A673 (cell line): ENCODE measurements at regions of chr3 and their contacts with region 1.

Region 1: GRCh38 chr3:14467814-14468620 is 65.6 kb downstream of the SLC6A6 start:
- DNase-seq: peak; percentile 41
- H3K4me3 ChIP-seq: no peak overlapping the region
- H3K27ac ChIP-seq: no peak overlapping the region
- H3K4me1 ChIP-seq: no peaks in the 10 kb centered on the region
- H3K27me3 ChIP-seq: no peaks in the 10 kb centered on the region
- CTCF ChIP-seq: peak; percentile 84

Region 2: DNA sequence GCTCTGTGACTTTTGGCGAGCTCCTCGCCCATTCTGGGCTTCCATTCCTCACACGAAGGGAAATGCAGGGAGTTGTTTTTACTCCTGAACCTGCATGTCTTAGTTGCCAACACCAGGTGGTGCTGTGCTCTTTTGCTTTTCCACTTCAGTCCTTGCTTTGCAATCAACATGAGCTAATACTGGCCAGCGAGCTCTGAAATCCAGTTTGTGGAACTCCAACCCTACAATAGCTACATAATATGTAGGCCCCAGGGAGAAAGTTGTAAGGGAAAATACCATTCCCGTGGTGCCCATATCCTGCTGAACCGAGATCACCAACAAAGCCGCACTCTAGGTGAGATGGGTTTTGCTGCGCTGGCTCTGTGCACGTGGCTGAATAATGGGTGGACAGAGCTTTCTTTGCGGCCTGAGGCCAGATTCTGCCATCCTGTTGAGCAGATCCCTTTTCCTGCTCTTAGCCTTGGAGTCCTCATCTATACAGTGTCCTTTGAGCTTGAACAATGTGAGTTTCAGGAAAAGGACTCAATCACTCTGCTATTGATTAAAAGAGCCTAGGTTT is 264.4 kb before region 1 on chr3:
- CTCF ChIA-PET with region 1: interaction called, 13 read pairs
- POLR2A ChIA-PET with region 1: no interaction called
- intact Hi-C with region 1: loop called (anchors 1 kb)
- DNase-seq: peak; percentile 76
- H3K4me3 ChIP-seq: no peak overlapping the region
- H3K27ac ChIP-seq: no peak overlapping the region
- H3K4me1 ChIP-seq: no peaks in the 10 kb centered on the region
- H3K27me3 ChIP-seq: no peaks in the 10 kb centered on the region
- CTCF ChIP-seq: peak; percentile 89

Region 3: DNA sequence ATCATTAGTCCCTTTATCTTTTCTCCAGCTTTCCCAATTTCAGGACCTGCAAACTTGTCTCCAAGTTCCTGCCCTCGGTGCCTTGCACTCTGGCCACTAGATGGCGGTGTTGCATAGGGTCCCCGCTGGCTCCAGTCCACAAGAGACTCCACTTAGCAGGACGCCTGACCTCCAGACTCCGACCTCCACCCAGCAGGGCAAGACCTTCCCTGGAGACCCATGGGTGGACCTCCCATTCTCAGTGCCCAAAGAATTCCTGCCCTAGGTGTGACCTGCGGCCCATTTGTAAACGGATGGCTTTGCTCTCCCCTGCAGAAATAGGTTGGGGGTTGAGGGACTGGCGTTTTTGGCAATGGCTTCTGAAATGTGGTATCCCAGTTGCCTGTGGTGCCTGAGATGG is 206.8 kb before region 1 on chr3:
- CTCF ChIA-PET with region 1: interaction called, 6 read pairs
- POLR2A ChIA-PET with region 1: no interaction called
- intact Hi-C with region 1: loop called (anchors 1 kb)
- DNase-seq: peak; percentile 74
- H3K4me3 ChIP-seq: no peak overlapping the region
- H3K27ac ChIP-seq: no peak overlapping the region
- H3K4me1 ChIP-seq: no peaks in the 10 kb centered on the region
- H3K27me3 ChIP-seq: no peaks in the 10 kb centered on the region
- CTCF ChIP-seq: peak; percentile 97

Region 4: GRCh38 chr3:14274999-14275961 is 192.7 kb before region 1 on chr3:
- CTCF ChIA-PET with region 1: no interaction called
- POLR2A ChIA-PET with region 1: no interaction called
- intact Hi-C with region 1: loop called (anchors 5 kb)
- DNase-seq: peak; percentile 30
- H3K4me3 ChIP-seq: no peak overlapping the region
- H3K27ac ChIP-seq: no peak overlapping the region
- H3K4me1 ChIP-seq: peaks cover 7% of the 10 kb centered on the region
- H3K27me3 ChIP-seq: no peaks in the 10 kb centered on the region
- CTCF ChIP-seq: peak; percentile 55

Region 5: DNA sequence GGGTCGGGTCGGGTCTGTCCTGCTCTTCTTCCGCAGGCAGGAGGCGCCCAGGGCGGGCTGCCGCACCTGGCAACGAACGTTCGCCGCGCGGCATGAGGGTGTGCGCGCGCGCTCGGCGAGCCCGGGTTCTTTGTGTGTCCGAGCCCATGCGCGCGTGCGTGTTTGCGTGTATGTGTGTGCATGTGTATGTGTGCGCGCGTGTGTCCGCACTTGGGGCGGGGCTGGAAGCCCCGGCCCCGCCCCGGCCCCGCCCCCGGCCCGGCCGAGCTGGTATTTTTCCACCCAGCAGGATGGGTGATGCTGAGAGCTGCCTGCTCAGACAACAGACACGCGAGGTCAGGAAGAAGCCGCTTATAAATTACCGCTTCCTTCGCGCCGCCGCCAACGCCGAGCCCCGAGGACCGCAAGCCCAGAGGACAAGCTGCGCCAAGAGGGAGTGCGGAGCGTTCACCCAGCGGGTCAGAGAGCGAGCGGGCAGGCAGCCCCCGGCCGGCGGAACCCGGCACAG is 65.7 kb before region 1 on chr3 and contains the start of gene SLC6A6:
- CTCF ChIA-PET with region 1: no interaction called
- POLR2A ChIA-PET with region 1: no interaction called
- intact Hi-C with region 1: loop called (anchors 5 kb)
- DNase-seq: peak; percentile 96
- H3K4me3 ChIP-seq: peak within 1 kb of the TSS; percentile 91
- H3K27ac ChIP-seq: peak within 1 kb of the TSS; percentile 80
- H3K4me1 ChIP-seq: peaks cover 18% of the 10 kb centered on the region
- H3K27me3 ChIP-seq: no peaks in the 10 kb centered on the region
- CTCF ChIP-seq: peak; percentile 45
- total RNA-seq, gene SLC6A6: 48.8 and 55.1 TPM in 2 replicates

Region 6: GRCh38 chr3:14507305-14507741 is 39.3 kb after region 1 on chr3:
- CTCF ChIA-PET with region 1: no interaction called
- POLR2A ChIA-PET with region 1: no interaction called
- intact Hi-C with region 1: no loop called
- DNase-seq: peak; percentile 18
- H3K4me3 ChIP-seq: no peak overlapping the region
- H3K27ac ChIP-seq: no peak overlapping the region
- H3K4me1 ChIP-seq: no peaks in the 10 kb centered on the region
- H3K27me3 ChIP-seq: no peaks in the 10 kb centered on the region
- CTCF ChIP-seq: no peak

Region 7: DNA sequence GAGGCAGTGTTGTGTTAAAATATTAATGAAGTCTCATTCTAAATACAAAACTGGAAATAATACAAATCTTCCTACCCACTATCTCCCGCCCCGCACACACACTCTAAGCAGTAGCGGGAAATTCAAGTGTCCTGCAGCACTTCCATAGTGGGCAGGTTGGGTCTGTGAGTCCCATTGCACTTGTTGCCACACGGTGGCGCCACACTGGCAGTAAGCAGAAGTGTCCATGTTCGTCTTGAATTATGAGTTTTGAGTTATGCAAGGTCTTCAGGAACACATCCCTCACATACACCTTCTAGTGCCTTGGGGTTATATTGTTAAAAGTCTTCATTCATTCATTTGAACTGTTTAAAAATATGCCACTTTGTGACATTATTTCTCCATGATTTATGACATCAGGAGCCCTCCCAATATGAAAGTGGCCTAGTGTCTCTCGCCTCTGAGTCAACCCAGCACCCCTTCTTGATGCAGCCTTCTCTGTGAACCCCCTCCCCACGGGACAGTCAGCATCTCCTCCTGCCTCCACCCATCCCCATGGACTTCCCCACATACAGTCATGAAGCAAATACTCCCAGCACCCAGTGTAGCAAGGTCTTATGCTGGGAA is 165.9 kb after region 1 on chr3:
- CTCF ChIA-PET with region 1: no interaction called
- POLR2A ChIA-PET with region 1: no interaction called
- intact Hi-C with region 1: no loop called
- DNase-seq: peak; percentile 73
- H3K4me3 ChIP-seq: no peak overlapping the region
- H3K27ac ChIP-seq: no peak overlapping the region
- H3K4me1 ChIP-seq: no peaks in the 10 kb centered on the region
- H3K27me3 ChIP-seq: peaks cover 28% of the 10 kb centered on the region
- CTCF ChIP-seq: peak; percentile 96

Region 8: GRCh38 chr3:15051531-15051930 is 583.5 kb after region 1 on chr3:
- CTCF ChIA-PET with region 1: no interaction called
- POLR2A ChIA-PET with region 1: interaction called, 11 read pairs
- intact Hi-C with region 1: no loop called
- DNase-seq: peak; percentile 67
- H3K4me3 ChIP-seq: no peak overlapping the region
- H3K27ac ChIP-seq: no peak overlapping the region
- H3K4me1 ChIP-seq: no peaks in the 10 kb centered on the region
- H3K27me3 ChIP-seq: no peaks in the 10 kb centered on the region
- CTCF ChIP-seq: peak; percentile 78

Region 9: GRCh38 chr3:15512166-15512565 is 1044.1 kb after region 1 on chr3:
- CTCF ChIA-PET with region 1: no interaction called
- POLR2A ChIA-PET with region 1: no interaction called
- intact Hi-C with region 1: no loop called
- DNase-seq: no peak
- H3K4me3 ChIP-seq: no peak overlapping the region
- H3K27ac ChIP-seq: no peak overlapping the region
- H3K4me1 ChIP-seq: no peaks in the 10 kb centered on the region
- H3K27me3 ChIP-seq: no peaks in the 10 kb centered on the region
- CTCF ChIP-seq: no peak